PC-3 (cell line): ENCODE measurements at regions of chr18 and their contacts with region 1.

Region 1: DNA sequence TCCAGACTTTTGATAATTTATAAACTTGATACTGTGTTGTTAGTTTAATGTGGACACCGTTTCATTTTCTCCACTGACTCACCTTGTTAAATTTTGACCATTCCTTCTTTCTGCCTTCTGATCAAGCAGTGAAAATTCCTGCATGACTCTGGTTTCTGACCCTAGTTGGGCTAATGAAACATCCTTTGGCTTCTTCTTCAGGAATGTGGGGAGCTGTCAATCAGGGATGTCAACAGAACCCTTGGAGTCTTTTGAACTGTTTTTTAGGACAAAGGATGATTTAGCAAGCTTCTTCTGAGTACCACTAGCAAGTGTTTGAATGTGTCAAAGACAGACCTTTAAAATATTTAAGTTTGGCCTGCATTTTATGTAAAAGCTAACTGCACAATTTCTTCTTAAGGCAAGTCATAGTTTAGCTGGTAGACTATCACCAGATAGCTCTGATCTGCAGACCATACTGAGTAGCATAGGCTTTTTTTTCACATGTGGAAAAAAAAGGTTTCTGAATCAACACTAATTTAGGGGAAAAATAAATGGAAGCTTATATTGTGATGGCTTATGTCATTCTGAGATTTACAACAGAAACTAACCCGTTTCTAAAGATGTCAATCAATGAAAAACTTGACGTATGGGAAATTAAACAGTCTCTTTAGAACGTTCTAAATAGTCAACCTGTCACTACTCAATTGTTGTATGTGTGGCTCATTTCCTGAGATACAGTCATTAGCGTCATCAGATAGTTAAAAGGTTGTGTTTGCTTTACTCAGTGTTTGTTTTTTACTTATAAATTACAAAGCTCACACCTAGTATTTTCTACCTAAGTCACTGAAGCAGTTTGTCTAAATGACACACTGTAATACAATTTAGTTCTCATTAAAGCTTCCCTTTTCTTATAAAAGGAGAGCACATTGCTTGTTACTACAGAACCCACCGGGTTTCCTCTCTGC is 311.4 kb downstream of the PTPRM start:
- DNase-seq: peak; percentile 91
- ATAC-seq: peak; percentile 68
- H3K4me3 ChIP-seq: peak overlapping the region; percentile 25
- H3K27ac ChIP-seq: peak overlapping the region; percentile 97
- H3K4me1 ChIP-seq: peaks cover 35% of the 10 kb centered on the region
- H3K27me3 ChIP-seq: no peaks in the 10 kb centered on the region
- CTCF ChIP-seq: no peak

Region 2: GRCh38 chr18:7272311-7273049 is 606.1 kb before region 1 on chr18:
- CTCF ChIA-PET with region 1: no interaction called
- POLR2A ChIA-PET with region 1: no interaction called
- intact Hi-C with region 1: loop called (anchors 2 kb)
- DNase-seq: peak; percentile 88
- ATAC-seq: peak; percentile 76
- H3K4me3 ChIP-seq: no peak overlapping the region
- H3K27ac ChIP-seq: no peak overlapping the region
- H3K4me1 ChIP-seq: peaks cover 18% of the 10 kb centered on the region
- H3K27me3 ChIP-seq: peaks cover 2% of the 10 kb centered on the region; the same call in 1 of the 2 replicates
- CTCF ChIP-seq: peak; percentile 69

Region 3: DNA sequence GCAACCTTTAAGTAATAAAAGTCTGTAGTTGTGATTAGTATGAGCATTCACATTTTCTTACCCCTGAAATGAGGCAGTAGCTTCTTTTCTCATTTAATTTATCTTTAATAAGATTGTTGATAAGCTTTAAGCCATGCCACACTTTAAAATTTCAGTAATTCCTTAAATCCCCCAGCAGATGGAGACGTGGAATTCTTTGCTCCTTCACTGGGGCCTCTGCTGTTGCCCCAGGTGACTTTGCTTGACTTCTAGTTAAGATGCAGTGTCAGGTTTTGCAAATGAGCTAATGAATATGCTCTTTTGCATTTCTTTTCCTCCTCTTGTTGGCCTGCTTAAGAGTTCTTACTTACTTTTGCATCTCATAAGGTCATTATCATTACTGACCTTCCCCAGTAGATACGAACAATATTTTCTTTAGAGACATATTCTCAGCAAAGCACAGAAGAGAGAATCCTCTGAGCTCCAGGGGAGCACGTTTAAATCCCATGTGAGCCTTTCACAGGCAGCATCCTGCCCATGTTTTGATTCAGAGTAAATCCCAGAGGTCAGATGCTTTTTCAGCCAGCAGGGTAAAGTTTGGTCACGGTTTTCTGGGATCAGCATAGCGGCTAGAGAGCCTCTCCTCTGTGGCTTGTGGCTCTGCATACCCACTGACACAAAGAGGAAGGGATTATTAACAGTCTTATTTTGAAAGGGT is 88.5 kb before region 1 on chr18:
- CTCF ChIA-PET with region 1: interaction called, 17 read pairs
- POLR2A ChIA-PET with region 1: no interaction called
- intact Hi-C with region 1: loop called (anchors 1 kb)
- DNase-seq: peak; percentile 65
- ATAC-seq: peak; percentile 90
- H3K4me3 ChIP-seq: no peak overlapping the region
- H3K27ac ChIP-seq: no peak overlapping the region
- H3K4me1 ChIP-seq: no peaks in the 10 kb centered on the region
- H3K27me3 ChIP-seq: no peaks in the 10 kb centered on the region
- CTCF ChIP-seq: peak; percentile 84

Region 4: DNA sequence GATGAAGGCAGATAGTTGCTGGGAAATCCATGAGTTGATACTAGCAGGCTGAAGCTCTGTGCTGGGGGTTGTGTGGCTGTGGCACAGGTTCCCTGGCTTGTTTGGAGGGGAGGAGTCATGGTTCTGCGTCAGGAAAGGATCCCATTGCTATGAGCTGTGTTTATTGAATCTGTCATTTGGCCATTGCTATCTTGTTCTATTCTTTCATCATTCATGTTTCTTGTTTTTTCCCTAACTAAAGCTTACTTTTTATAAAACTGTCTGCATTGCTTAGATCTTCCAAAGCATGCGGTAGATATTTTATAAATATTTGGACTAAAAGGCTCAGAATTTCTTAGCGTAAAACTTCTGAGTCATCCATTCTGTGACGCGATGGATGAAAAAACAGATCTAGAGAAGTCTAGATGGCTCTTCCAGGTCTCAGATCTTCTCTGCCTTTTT is 23.9 kb after region 1 on chr18:
- CTCF ChIA-PET with region 1: no interaction called
- POLR2A ChIA-PET with region 1: no interaction called
- intact Hi-C with region 1: loop called (anchors 1 kb)
- DNase-seq: no peak
- ATAC-seq: no peak
- H3K4me3 ChIP-seq: no peak overlapping the region
- H3K27ac ChIP-seq: peak overlapping the region; percentile 35
- H3K4me1 ChIP-seq: peaks cover 38% of the 10 kb centered on the region
- H3K27me3 ChIP-seq: no peaks in the 10 kb centered on the region
- CTCF ChIP-seq: no peak

Region 5: GRCh38 chr18:7946734-7947377 is 68.3 kb after region 1 on chr18:
- CTCF ChIA-PET with region 1: interaction called, 3 read pairs
- POLR2A ChIA-PET with region 1: interaction called, 6 read pairs
- intact Hi-C with region 1: loop called (anchors 1 kb)
- DNase-seq: peak; percentile 76
- ATAC-seq: peak; percentile 55
- H3K4me3 ChIP-seq: peak overlapping the region; percentile 26
- H3K27ac ChIP-seq: peak overlapping the region; percentile 95
- H3K4me1 ChIP-seq: peaks cover 65% of the 10 kb centered on the region
- H3K27me3 ChIP-seq: no peaks in the 10 kb centered on the region
- CTCF ChIP-seq: no peak

Region 6: DNA sequence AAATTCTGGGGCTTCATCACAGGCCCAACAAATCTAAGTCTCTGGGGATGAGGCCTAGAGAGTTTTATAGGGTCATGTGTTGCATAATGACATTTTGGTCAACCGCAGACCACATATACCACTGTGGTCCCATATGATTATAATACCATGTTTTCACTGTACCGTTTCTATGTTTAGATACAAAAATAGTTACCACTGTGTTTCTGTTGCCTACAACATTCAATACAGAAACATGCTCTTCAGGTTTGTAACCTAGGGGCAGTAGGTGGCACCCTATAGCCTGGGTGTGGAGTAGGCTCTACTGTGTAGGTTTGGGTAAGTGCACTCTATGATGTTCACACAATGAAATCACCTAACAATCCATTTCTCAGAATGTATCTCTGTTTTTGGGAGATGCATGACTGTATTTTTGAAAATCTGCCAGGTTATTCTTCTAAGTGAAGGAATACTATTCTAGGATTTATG is 173.7 kb after region 1 on chr18:
- CTCF ChIA-PET with region 1: no interaction called
- POLR2A ChIA-PET with region 1: no interaction called
- intact Hi-C with region 1: loop called (anchors 5 kb)
- DNase-seq: peak; percentile 27
- ATAC-seq: peak; percentile 70
- H3K4me3 ChIP-seq: no peak overlapping the region
- H3K27ac ChIP-seq: no peak overlapping the region
- H3K4me1 ChIP-seq: peaks cover 13% of the 10 kb centered on the region
- H3K27me3 ChIP-seq: no peaks in the 10 kb centered on the region
- CTCF ChIP-seq: peak; percentile 46; the same call in 1 of the 2 replicates

Region 7: GRCh38 chr18:8065284-8065683 is 186.7 kb after region 1 on chr18:
- CTCF ChIA-PET with region 1: no interaction called
- POLR2A ChIA-PET with region 1: no interaction called
- intact Hi-C with region 1: no loop called
- DNase-seq: no peak
- ATAC-seq: no peak
- H3K4me3 ChIP-seq: no peak overlapping the region
- H3K27ac ChIP-seq: no peak overlapping the region
- H3K4me1 ChIP-seq: no peaks in the 10 kb centered on the region
- H3K27me3 ChIP-seq: no peaks in the 10 kb centered on the region
- CTCF ChIP-seq: no peak

Region 8: DNA sequence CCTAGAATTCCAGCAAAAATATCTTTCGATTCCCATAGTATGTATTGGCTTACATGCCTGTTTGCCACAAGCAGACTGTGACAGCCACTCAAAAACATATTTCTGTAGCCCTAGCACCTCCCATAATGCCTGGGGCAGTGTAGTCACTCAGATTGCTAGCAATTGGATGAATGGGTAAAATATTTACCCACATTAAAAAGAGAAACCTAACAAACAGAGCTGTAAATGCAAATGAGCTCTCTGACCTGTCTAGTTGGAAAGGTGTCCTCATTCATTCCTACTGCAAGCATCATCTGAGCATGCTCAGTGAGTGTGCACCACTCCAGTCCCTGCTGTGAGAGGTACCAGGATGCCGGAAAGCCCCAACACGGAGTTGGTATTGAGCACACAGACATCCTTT is 496.7 kb after region 1 on chr18:
- CTCF ChIA-PET with region 1: no interaction called
- POLR2A ChIA-PET with region 1: no interaction called
- intact Hi-C with region 1: loop called (anchors 5 kb)
- DNase-seq: peak; percentile 17
- ATAC-seq: peak; percentile 23
- H3K4me3 ChIP-seq: no peak overlapping the region
- H3K27ac ChIP-seq: no peak overlapping the region
- H3K4me1 ChIP-seq: no peaks in the 10 kb centered on the region
- H3K27me3 ChIP-seq: no peaks in the 10 kb centered on the region
- CTCF ChIP-seq: no peak